Head of caudate nucleus (tissue), 42 donors: ENCODE measurements at regions of chr16 and their contacts with region 1.

Region 1: GRCh38 chr16:24036614-24037013 is 200.8 kb downstream of the PRKCB start:
- DNase-seq: peak in 35 of 42 donors; percentile 25 to 81 (median 55)

Region 2: DNA sequence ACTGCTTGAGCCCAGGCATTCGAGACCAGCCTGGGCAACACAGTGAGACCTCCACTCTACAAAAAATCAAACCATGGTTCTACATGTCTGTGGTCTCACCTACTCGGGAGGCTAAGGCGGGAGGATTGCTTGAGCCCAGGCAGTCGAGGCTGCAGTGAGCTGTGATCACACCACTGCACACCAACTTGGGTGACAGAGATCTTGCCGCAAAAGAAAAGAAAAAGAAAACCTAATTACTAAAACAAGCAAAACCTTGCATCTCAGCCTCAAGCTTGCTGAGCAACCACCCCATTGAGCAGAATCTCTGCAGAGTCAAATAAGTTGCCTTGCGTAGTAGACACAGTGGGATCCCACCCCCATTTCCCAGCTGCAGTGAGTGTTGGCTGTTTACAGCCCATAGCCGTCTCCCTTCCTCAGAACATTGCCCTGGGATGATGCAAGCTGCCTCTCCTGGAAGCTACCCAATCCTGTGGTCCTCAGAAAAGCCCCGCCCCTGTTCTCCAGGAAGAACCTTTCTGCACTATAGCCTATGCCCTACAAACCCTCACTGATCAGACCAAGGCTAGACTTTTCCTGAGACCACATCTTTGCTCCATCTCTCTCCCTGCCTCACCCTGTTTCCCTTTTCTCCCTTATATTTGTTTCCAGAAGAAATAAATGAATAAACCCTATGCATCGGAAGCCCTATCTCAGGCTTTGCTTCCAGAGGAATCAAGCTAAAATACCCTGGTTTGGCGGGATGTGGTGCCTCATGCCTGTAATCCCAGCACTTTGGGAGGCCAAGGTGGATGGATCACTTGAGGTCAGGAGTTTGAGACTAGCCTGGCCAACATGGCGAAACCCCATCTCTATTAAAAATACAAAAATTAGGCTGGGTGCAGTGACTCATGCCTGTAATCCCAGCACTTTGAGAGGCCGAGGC is 306.9 kb before region 1 on chr16:
- intact Hi-C with region 1: loop called (anchors 10 kb)
- DNase-seq: no peak

Region 3: GRCh38 chr16:23803591-23804123 is 233.0 kb before region 1 on chr16:
- intact Hi-C with region 1: loop called (anchors 5 kb)
- DNase-seq: peak; percentile 57 to 92 (median 77)

Region 4: DNA sequence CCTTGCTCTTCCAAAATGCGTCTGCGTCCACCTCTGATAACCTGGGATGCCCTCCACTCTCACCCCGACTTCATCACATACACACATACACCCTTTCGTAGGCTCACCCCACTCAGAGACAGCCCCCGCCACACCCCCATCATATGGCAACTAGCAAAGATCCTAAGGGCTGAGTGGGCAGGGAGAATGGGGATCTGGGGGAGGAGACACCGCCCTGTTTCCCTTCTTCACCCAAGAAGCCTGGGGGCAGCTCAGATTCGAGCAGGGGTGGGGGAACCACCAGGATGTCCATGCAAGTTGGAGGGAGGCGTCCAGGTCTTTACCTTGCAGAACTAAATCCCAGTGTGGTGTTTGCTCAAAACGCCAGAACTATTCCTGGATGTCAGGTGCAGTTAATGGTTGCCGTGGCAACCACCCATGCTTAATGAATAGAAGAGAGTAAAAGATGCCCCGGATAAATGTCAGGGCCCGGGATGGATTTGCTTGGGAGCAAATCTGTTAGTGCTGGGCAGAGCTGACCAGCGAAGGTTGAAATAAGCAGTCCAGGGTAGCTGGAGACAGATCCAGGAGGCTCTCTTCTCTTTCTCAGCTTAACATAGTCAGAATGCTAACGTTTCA is 292.3 kb after region 1 on chr16:
- intact Hi-C with region 1: no loop called
- DNase-seq: peak; percentile 20 to 81 (median 55)